Psoas muscle (tissue), 8 donors: ENCODE measurements at regions of chr1 and their contacts with region 1.

Region 1: GRCh38 chr1:161739865-161740566 is 9.6 kb upstream of the DUSP12 start:
- DNase-seq: no peak
- ATAC-seq: no peak
- H3K4me3 ChIP-seq: no peak overlapping the region
- H3K27ac ChIP-seq: no peak overlapping the region
- H3K4me1 ChIP-seq: no peaks in the 10 kb centered on the region
- H3K27me3 ChIP-seq: peaks cover 0 to 2% (median 0%) of the 10 kb centered on the region in 3 donors
- CTCF ChIP-seq: no peak

Region 2: DNA sequence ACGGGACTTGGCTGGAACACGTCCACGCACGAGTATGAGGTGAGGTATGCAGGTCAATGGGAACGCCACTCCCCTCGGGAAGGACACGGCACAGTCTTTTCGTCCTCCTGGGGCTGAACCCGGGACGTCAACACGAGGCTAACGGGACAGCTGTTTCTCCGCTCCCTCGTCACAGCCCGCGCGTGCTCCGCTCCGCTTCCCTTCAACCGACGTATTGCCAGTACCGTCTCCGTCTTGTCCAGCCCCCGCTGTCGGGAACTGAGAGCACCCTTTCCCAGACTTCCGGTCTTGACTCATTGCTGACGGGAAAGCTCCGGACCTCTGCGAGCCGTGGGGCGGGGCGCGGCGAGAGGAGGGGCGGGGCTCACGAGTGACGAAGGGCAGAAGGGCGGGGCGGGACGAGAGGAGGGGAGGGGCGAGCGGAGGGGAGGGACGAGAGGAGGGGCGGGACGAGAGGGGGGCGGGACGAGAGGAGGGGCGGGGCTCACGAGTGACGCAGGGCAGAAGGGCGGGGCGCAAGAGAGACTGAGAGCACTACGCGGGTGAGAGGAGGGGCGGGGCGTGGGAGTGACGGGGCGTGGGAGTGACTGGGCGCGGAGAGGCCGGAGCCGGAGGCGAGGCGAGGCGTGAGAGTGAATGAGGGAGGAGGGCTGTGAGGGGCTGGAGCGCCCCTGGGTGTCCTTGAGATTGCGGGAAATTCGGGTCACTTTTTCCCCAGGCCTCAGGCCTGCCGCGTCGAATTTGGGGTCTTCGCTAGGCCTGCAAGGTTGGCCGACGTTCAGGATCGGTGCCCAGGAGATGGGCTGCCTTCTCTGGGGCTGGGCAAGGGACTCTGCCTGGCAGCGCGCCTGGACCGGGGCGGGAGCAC is 350.1 kb before region 1 on chr1:
- intact Hi-C with region 1: no loop called
- DNase-seq: peak; percentile 98 to 99
- ATAC-seq: peak; percentile 94 to 96 (median 95)
- H3K4me3 ChIP-seq: peak overlapping the region; percentile 77
- H3K27ac ChIP-seq: peak overlapping the region; percentile 88
- H3K4me1 ChIP-seq: peaks cover 6% of the 10 kb centered on the region
- H3K27me3 ChIP-seq: no peaks in the 10 kb centered on the region
- CTCF ChIP-seq: no peak

Region 3: DNA sequence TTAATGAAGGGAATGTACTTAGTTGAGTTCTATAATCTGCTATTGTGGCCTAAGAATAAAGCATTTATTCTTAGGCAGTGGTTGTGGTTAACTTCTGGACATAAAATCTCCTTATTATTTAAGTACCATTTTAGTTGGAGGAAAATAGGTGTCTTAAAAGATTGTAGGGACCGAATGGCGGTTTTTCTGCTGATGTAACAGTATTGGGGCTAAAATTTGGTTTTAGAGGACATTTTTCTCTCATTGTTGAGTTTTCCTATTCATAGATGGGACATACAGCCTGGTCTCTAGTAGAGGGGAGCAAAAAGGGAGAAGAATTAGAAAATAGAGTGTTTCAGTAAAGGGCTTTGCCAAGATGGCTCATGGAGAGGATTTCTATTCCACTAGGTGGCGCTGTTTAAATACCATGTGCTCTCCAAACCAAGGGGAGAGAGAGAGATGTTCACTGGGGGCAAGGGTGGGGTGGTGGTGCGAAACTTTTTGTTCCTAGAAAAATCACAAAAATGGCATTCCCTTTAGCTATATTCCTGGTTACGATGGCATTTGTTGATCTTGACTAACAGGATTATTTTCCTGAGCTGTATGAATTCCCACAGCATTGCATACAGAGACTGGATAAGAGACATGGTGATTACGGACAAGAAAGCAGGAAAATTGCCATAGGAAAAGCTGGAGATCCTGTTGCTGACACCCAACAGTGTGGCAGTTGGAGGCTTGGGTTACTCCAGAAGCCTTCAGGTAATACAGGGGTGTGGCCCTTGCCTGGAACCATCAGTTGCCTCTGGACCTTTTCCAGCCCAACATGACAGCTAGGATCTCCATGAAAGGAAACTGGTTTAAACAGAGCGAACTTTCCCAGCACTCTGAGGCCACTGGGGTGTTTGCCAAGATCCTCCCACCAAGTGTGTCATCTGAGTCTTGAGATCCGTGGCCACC is 252.9 kb before region 1 on chr1:
- intact Hi-C with region 1: loop called in 1 of 2 experiments (anchors 2 kb)
- DNase-seq: no peak
- ATAC-seq: peak in 2 of 4 donors; percentile 51 to 64
- H3K4me3 ChIP-seq: peak overlapping the region; percentile 39
- H3K27ac ChIP-seq: no peak overlapping the region
- H3K4me1 ChIP-seq: no peaks in the 10 kb centered on the region
- H3K27me3 ChIP-seq: peaks cover 2 to 39% (median 13%) of the 10 kb centered on the region in 3 donors
- CTCF ChIP-seq: peak; percentile 66

Region 4: DNA sequence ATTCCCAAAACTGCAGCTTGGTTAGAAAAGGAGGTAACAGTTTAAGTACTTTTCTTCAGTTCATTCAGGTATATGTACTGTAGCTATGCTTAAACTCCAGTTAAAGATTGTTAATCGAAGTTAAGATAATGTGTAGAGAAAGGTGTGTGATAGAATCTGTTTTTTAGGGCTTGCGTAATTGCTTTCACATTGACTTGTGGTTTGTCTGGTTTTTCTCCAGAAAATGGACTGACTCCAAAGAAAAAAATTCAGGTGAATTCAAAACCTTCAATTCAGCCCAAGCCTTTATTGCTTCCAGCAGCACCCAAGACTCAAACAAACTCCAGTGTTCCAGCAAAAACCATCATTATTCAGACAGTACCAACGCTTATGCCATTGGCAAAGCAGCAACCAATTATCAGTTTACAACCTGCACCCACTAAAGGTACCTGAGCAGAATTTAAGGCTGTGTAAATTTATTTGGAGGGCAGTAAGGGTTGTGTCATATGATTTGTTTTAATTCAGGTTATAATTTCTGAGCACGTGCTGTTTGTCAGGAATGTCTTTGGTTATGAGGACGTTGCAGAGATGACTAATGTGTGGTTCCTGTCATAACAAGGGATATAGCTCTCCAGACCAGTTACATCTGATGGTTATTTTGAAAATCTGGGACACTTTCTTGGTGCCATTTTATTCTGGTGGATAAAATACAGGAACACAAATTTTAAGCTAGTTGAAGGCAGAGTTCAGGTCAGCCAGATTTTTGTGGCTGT is 52.1 kb after region 1 on chr1:
- intact Hi-C with region 1: no loop called
- DNase-seq: no peak
- ATAC-seq: no peak
- H3K4me3 ChIP-seq: no peak overlapping the region
- H3K27ac ChIP-seq: no peak overlapping the region
- H3K4me1 ChIP-seq: no peaks in the 10 kb centered on the region
- H3K27me3 ChIP-seq: no peaks in the 10 kb centered on the region
- CTCF ChIP-seq: no peak